ENCODE measurements at regions of chr9 and their contacts with region 1.

Region 1: DNA sequence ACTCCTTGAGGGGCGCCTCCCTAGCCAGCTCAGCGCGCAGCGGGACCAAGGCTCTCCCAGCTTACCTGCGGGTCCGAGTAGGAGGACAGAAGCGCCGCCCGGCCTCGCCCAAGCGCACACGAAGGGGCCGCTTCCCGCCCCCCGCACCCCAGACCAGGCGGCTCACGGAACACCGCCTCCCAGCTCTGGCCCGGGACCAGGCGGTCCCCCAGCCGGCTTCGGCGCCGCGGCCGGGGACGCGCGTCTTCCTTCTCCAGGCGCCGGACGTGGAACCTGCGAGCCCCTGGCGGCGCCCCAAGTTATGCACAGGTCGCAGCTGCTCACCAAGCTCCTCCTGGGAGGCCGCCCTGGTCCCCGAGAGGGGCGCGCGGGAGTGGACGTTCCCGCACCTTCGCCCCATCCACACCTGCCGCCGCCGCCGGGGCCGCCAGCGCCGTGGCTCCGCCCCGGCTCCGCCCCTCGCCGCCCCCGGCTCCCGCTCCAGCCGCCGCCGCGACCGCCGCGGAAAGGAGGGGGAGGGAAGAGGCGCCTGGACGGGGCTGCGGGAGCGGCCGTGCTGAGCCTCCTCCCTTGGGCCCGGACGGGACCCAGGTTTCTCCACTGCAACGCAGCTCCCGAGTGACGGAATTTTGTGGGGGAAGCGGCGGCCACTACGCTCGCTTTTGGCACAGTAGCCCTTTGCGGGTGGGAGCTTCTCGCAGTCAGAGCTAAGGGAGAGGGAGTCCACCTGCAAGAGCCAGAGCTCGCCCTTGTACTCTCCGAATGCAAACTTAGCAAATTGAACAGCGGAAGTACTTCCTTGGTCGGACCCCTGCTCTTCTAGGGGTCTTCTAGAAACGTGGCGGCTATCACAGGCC is 77.5 kb upstream of the IFNE start:
- DNase-seq: peak; percentile 55
- ATAC-seq: peak; percentile 91
- H3K4me3 ChIP-seq: peak overlapping the region; percentile 98
- H3K27ac ChIP-seq: peak overlapping the region; percentile 94
- H3K4me1 ChIP-seq: peaks cover 9% of the 10 kb centered on the region
- H3K27me3 ChIP-seq: no peaks in the 10 kb centered on the region
- CTCF ChIP-seq: no peak
- POLR2A ChIP-seq: no peak; the same call in 1 of the 2 replicates
- RAD21 ChIP-seq: peak; percentile 31

Region 2: GRCh38 chr9:21465859-21466518 is 93.7 kb before region 1 on chr9:
- CTCF ChIA-PET with region 1: interaction called, 4 read pairs
- POLR2A ChIA-PET with region 1: no interaction called
- dilution Hi-C with region 1: no loop called
- in situ Hi-C with region 1: no loop called
- intact Hi-C with region 1: loop called (anchors 1 kb)
- DNase-seq: peak; percentile 68
- ATAC-seq: peak; percentile 75
- H3K4me3 ChIP-seq: no peak overlapping the region
- H3K27ac ChIP-seq: no peak overlapping the region
- H3K4me1 ChIP-seq: no peaks in the 10 kb centered on the region
- H3K27me3 ChIP-seq: no peaks in the 10 kb centered on the region
- CTCF ChIP-seq: peak; percentile 83
- POLR2A ChIP-seq: no peak
- RAD21 ChIP-seq: peak; percentile 89

Region 3: DNA sequence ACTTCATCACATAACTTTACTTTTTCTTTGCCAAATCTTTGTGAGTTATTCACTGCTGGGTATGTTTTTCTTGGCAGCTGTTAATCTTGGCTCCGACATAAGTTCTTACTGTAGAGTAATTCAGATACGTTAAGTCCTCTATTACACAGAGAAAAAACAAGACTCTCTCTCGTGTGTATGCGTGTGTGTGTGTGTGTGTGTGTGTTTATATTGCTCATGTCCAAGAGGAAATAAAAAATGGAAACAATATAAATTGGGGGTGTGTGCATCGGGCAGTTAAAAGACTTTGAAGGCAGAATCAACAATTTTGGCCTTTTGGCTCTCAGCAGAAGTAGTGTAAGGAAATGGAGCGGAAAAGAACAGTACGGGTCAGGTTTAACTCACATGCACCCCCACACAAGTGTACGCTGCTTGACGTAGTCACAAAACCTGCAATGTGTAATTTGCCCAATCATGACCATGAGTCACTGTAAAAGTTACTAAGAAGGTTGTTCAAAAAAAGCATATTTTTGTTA is 10.3 kb before region 1 on chr9:
- CTCF ChIA-PET with region 1: no interaction called
- POLR2A ChIA-PET with region 1: no interaction called
- dilution Hi-C with region 1: no loop called
- in situ Hi-C with region 1: no loop called
- intact Hi-C with region 1: loop called (anchors 1 kb)
- DNase-seq: peak; percentile 97
- ATAC-seq: peak; percentile 80
- H3K4me3 ChIP-seq: peak overlapping the region; percentile 39; the same call in 1 of the 2 replicates
- H3K27ac ChIP-seq: peak overlapping the region; percentile 67
- H3K4me1 ChIP-seq: peaks cover 22% of the 10 kb centered on the region
- H3K27me3 ChIP-seq: no peaks in the 10 kb centered on the region
- CTCF ChIP-seq: no peak
- POLR2A ChIP-seq: no peak
- RAD21 ChIP-seq: no peak

Region 4: GRCh38 chr9:21591221-21592062 is 31.8 kb after region 1 on chr9:
- CTCF ChIA-PET with region 1: no interaction called
- POLR2A ChIA-PET with region 1: no interaction called
- dilution Hi-C with region 1: no loop called
- in situ Hi-C with region 1: no loop called
- intact Hi-C with region 1: loop called (anchors 2 kb)
- DNase-seq: peak; percentile 99
- ATAC-seq: peak; percentile 97
- H3K4me3 ChIP-seq: no peak overlapping the region
- H3K27ac ChIP-seq: peak overlapping the region; percentile 77
- H3K4me1 ChIP-seq: peaks cover 2% of the 10 kb centered on the region; the same call in 1 of the 2 replicates
- H3K27me3 ChIP-seq: no peaks in the 10 kb centered on the region
- CTCF ChIP-seq: no peak
- POLR2A ChIP-seq: peak; percentile 77; the same call in 1 of the 2 replicates
- RAD21 ChIP-seq: no peak; the same call in 1 of the 2 replicates

Region 5: GRCh38 chr9:21677834-21678233 is 118.2 kb after region 1 on chr9:
- CTCF ChIA-PET with region 1: no interaction called
- POLR2A ChIA-PET with region 1: no interaction called
- dilution Hi-C with region 1: no loop called
- in situ Hi-C with region 1: no loop called
- intact Hi-C with region 1: loop called (anchors 2 kb)
- DNase-seq: peak; percentile 94
- ATAC-seq: peak; percentile 55
- H3K4me3 ChIP-seq: peak overlapping the region; percentile 27; the same call in 1 of the 2 replicates
- H3K27ac ChIP-seq: no peak overlapping the region
- H3K4me1 ChIP-seq: peaks cover 11% of the 10 kb centered on the region
- H3K27me3 ChIP-seq: no peaks in the 10 kb centered on the region
- CTCF ChIP-seq: no peak
- POLR2A ChIP-seq: no peak
- RAD21 ChIP-seq: no peak

Region 6: DNA sequence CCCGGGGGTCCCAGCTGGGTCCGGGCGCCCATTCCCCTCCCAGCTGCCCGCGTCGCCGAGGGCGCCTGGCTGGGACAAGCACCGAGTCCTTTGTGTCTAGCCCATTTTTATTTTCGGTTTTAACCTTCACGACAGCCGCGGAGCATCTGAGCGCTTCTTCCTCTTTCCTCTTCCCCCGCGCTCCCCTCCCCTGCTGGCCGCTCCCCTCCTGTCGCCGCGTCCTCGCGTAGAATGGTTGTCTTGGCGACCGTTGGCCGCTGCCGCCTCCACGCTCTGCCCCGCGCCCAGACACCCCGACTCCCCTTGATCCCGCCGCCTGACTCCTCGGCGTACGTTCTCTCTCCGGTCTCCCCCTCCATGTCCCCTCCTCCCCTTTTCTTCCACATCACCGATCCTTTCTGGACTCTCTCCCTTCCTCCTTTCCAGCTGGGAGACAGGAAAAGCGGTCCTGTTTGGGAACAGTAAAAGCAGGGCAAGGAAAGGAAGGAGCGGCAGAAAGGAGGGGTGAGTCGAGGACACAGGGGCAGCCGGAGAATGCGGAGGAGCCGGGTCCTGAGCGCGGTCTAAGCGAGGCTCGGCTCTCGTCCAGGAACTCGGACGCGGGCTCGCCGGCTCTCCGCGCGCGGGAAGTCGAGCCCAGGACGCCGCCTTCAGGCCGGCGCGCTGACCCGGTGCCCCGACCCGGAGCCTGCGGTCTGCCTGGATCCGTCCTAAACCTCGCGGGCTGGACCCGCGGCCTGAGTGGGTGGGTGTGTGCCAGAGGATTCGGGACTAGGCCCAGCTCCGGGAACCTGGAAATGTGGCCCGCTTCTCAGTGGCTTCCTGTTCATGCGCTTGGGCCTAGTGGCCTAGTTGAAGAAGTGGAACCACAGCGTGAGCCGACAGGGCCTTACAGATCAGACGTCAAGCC is 435.8 kb after region 1 on chr9:
- CTCF ChIA-PET with region 1: no interaction called
- POLR2A ChIA-PET with region 1: no interaction called
- dilution Hi-C with region 1: no loop called
- in situ Hi-C with region 1: no loop called
- intact Hi-C with region 1: loop called (anchors 10 kb)
- DNase-seq: peak; percentile 69
- ATAC-seq: peak; percentile 71
- H3K4me3 ChIP-seq: peak overlapping the region; percentile 77
- H3K27ac ChIP-seq: peak overlapping the region; percentile 90
- H3K4me1 ChIP-seq: peaks cover 7% of the 10 kb centered on the region
- H3K27me3 ChIP-seq: no peaks in the 10 kb centered on the region
- CTCF ChIP-seq: 0 out of 2 replicates have a peak, but pooled peaks have one; percentile 19
- POLR2A ChIP-seq: no peak; the same call in none of the 2 replicates
- RAD21 ChIP-seq: no peak